B cell (primary cell): ENCODE measurements at regions of chr6 and their contacts with region 1.

Region 1: DNA sequence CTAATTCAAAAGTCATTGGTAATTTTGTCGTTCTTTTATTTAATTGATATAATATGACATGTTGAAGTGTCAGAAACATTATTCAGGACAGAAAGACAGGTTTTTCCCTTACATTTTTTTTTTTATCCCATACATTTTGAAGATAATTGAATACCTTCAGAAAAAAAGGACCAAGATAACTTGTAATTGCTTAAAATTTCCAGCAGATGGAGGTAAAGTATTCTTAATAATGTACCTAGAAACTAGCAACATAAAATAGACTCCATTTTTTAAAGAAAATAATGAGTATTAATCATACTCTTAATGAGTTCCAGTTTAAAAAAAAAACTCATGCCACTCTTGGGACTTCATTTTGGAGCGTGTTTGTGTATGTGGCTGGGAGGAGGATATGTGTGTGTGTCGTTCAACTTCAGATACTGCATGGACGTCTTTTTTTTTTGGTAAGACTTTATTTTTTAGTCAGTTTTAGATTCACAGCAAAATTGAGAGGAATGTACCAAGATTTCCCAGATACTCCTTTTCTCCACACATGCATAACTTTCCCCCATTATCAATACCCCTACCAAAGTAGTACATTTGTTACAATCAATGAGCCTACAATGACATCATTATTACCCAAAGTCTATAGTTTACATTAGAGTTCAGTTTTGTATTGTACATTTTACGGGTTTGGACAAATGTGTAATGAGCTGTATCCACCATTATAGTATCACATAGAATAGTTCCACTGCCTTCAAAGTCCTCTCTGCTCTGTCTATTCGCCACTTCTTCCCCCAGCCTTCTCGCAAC is 79.4 kb downstream of the ROS1 start:
- DNase-seq: peak; percentile 20
- ATAC-seq: no peak
- H3K4me3 ChIP-seq: no peak overlapping the region
- H3K4me3 Mint-ChIP-seq: no peak overlapping the region
- H3K27ac ChIP-seq: no peak overlapping the region
- H3K27ac Mint-ChIP-seq: no peak overlapping the region
- H3K4me1 ChIP-seq: no peaks in the 10 kb centered on the region
- H3K4me1 Mint-ChIP-seq: no peaks in the 10 kb centered on the region
- H3K27me3 ChIP-seq: no peaks in the 10 kb centered on the region
- H3K27me3 Mint-ChIP-seq: peaks cover 8% of the 10 kb centered on the region
- CTCF ChIP-seq: peak; percentile 85

Region 2: DNA sequence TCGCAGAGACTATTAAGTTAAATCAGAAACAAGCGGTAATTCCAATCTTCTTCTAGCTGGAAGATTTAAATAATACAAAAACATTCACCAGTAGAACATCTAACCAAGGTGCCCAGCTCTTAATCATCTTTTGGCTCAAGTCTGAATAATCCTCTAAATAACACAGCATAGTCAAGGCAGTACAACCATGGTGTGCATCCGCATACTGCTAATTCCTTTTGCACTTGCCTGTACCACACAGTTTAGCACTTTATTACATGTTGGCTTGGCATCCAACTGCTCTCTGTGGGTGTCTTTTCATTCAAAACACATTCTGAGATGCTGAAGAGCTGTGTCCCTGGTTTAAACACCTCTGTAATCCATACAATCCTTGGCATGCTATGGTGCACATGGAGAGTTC is 38.7 kb before region 1 on chr6:
- CTCF ChIA-PET with region 1: no interaction called
- POLR2A ChIA-PET with region 1: no interaction called
- intact Hi-C with region 1: no loop called
- DNase-seq: no peak
- ATAC-seq: no peak
- H3K4me3 ChIP-seq: no peak overlapping the region
- H3K4me3 Mint-ChIP-seq: no peak overlapping the region
- H3K27ac ChIP-seq: no peak overlapping the region
- H3K27ac Mint-ChIP-seq: no peak overlapping the region
- H3K4me1 ChIP-seq: no peaks in the 10 kb centered on the region
- H3K4me1 Mint-ChIP-seq: no peaks in the 10 kb centered on the region
- H3K27me3 ChIP-seq: no peaks in the 10 kb centered on the region
- H3K27me3 Mint-ChIP-seq: peaks cover 4% of the 10 kb centered on the region
- CTCF ChIP-seq: no peak

Region 3: GRCh38 chr6:117326396-117326795 is 19.9 kb before region 1 on chr6:
- CTCF ChIA-PET with region 1: no interaction called
- POLR2A ChIA-PET with region 1: no interaction called
- intact Hi-C with region 1: no loop called
- DNase-seq: no peak
- ATAC-seq: no peak
- H3K4me3 ChIP-seq: no peak overlapping the region
- H3K4me3 Mint-ChIP-seq: no peak overlapping the region
- H3K27ac ChIP-seq: no peak overlapping the region
- H3K27ac Mint-ChIP-seq: no peak overlapping the region
- H3K4me1 ChIP-seq: no peaks in the 10 kb centered on the region
- H3K4me1 Mint-ChIP-seq: no peaks in the 10 kb centered on the region
- H3K27me3 ChIP-seq: no peaks in the 10 kb centered on the region
- H3K27me3 Mint-ChIP-seq: peaks cover 18% of the 10 kb centered on the region
- CTCF ChIP-seq: no peak

Region 4: GRCh38 chr6:117674991-117675657 is 328.8 kb after region 1 on chr6 and contains the start of gene NUS1:
- CTCF ChIA-PET with region 1: no interaction called
- POLR2A ChIA-PET with region 1: no interaction called
- intact Hi-C with region 1: loop called (anchors 2 kb)
- DNase-seq: peak; percentile 98
- ATAC-seq: peak; percentile 98
- H3K4me3 ChIP-seq: peak within 1 kb of the TSS; percentile 55 to 81 (median 65)
- H3K4me3 Mint-ChIP-seq: peak within 1 kb of the TSS; percentile 90
- H3K27ac ChIP-seq: peak within 1 kb of the TSS; percentile 55 to 75
- H3K27ac Mint-ChIP-seq: peak within 1 kb of the TSS; percentile 94
- H3K4me1 ChIP-seq: peaks cover 28 to 30% of the 10 kb centered on the region in 2 donors
- H3K4me1 Mint-ChIP-seq: peaks cover 42% of the 10 kb centered on the region
- H3K27me3 ChIP-seq: no peaks in the 10 kb centered on the region
- H3K27me3 Mint-ChIP-seq: no peaks in the 10 kb centered on the region
- CTCF ChIP-seq: peak; percentile 75
- total RNA-seq, gene NUS1: 22.1 and 23.1 TPM in 2 replicates